ENCODE measurements at regions of chr11 and their contacts with region 1.

Region 1: DNA sequence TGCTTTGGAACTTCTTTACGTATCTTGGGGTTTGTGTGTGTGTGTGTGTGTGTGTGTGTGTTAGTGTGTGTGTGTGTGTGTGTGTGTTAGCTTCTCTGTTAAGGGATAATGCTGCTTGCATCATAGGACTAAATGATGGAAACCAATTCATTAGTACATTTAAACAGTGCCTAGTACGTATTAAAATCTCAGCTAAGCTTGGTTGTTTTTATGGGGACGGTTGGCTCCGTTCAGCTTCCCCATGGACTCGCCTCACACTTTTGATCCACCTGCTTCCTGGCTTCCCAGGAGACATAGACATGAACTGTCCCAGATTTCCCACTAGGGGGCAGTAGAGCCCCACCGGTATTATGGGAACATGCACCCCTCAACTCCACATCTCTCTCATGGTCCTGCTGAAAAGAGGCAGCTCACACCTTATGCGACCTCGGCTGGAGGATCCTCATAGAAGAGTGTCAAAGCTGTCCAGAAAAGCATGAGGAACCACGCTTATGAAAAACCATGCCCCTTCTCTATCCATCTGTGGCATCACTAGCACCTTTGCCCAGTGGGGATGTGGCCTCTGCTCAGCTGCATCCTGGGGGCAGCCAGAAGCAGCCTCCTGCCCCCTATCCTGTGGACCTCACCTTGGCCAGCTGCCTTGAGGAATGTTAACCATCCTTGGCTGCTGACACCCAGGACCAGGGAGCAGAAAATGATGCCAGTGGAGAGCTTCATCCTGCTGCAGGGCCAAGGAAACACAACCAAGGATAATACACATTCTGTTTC is 9.7 kb upstream of the SAAL1 start:
- DNase-seq: peak; percentile 41 to 81 (median 50)
- ATAC-seq: peak; percentile 89
- H3K4me3 ChIP-seq: no peak overlapping the region
- H3K4me3 Mint-ChIP-seq: no peak overlapping the region
- H3K27ac ChIP-seq: no peak overlapping the region
- H3K27ac Mint-ChIP-seq: no peak overlapping the region
- H3K4me1 ChIP-seq: peaks cover 6% of the 10 kb centered on the region
- H3K4me1 Mint-ChIP-seq: no peaks in the 10 kb centered on the region
- H3K27me3 ChIP-seq: peaks cover 3 to 7% of the 10 kb centered on the region in 2 experiments
- H3K27me3 Mint-ChIP-seq: peaks cover 27% of the 10 kb centered on the region
- CTCF ChIP-seq: peak; percentile 86

Region 2: GRCh38 chr11:18731949-18732821 is 616.6 kb after region 1 on chr11:
- CTCF ChIA-PET with region 1: interaction called, 3 read pairs
- POLR2A ChIA-PET with region 1: no interaction called
- intact Hi-C with region 1: loop called (anchors 2 kb)
- DNase-seq: peak; percentile 40 to 82 (median 67)
- ATAC-seq: peak; percentile 80
- H3K4me3 ChIP-seq: no peak overlapping the region
- H3K4me3 Mint-ChIP-seq: no peak overlapping the region
- H3K27ac ChIP-seq: no peak overlapping the region
- H3K27ac Mint-ChIP-seq: no peak overlapping the region
- H3K4me1 ChIP-seq: peaks cover 17% of the 10 kb centered on the region
- H3K4me1 Mint-ChIP-seq: peaks cover 10% of the 10 kb centered on the region
- H3K27me3 ChIP-seq: no peaks in the 10 kb centered on the region
- H3K27me3 Mint-ChIP-seq: no peaks in the 10 kb centered on the region
- CTCF ChIP-seq: peak; percentile 97

Region 3: GRCh38 chr11:18768472-18768901 is 652.9 kb after region 1 on chr11:
- CTCF ChIA-PET with region 1: interaction called, 10 read pairs
- POLR2A ChIA-PET with region 1: no interaction called
- intact Hi-C with region 1: loop called (anchors 1 kb)
- DNase-seq: no peak
- ATAC-seq: no peak
- H3K4me3 ChIP-seq: no peak overlapping the region
- H3K4me3 Mint-ChIP-seq: no peak overlapping the region
- H3K27ac ChIP-seq: no peak overlapping the region
- H3K27ac Mint-ChIP-seq: no peak overlapping the region
- H3K4me1 ChIP-seq: no peaks in the 10 kb centered on the region
- H3K4me1 Mint-ChIP-seq: no peaks in the 10 kb centered on the region
- H3K27me3 ChIP-seq: peaks cover 0 to 3% of the 10 kb centered on the region in 2 experiments
- H3K27me3 Mint-ChIP-seq: peaks cover 18% of the 10 kb centered on the region
- CTCF ChIP-seq: no peak

Region 4: DNA sequence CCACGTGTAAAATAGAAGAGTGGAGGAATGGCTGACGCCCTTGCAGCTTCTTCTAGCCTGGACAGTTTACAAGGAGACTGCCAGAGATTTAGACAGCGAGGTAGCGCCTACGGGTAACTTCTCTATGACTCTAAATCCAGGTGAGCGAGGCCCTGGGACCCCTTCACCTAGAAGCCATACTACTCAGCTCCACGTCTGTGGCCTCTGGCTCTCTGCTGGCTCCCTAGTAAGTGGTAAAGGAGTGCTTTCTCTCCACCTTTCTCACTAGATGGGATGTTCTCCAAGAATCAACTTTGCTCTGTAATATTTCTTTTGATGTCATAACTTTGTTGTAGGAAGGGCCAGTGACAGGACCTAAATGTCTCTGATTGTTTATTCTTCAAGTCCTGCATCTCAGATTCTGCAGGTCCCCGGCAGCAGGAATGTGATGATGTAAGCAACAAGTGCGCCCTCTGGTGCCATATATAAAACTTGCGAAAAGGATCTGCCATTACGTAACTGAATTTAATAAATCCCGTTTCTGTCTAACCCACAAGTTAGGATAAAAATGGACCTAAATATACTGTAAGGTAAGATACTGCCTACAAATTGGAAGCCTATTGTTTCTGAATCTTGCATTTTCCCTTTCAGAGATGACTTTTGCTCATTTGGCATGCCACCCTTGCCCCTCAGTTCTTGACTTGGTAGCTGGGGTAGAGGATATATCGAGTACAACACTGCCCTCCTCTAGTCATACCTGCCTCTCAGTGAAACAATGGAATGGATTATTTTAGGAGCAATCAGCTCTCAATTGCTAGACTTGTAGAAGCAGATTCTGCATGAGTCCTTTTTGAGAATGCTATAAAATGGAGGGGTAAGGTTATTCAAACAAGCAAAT is 687.1 kb after region 1 on chr11:
- CTCF ChIA-PET with region 1: interaction called, 4 read pairs
- POLR2A ChIA-PET with region 1: no interaction called
- intact Hi-C with region 1: loop called (anchors 1 to 5 kb)
- DNase-seq: peak in 10 of 14 experiments; percentile 5 to 71 (median 22)
- ATAC-seq: peak; percentile 41
- H3K4me3 ChIP-seq: no peak overlapping the region
- H3K4me3 Mint-ChIP-seq: no peak overlapping the region
- H3K27ac ChIP-seq: no peak overlapping the region
- H3K27ac Mint-ChIP-seq: no peak overlapping the region
- H3K4me1 ChIP-seq: no peaks in the 10 kb centered on the region
- H3K4me1 Mint-ChIP-seq: no peaks in the 10 kb centered on the region
- H3K27me3 ChIP-seq: no peaks in the 10 kb centered on the region
- H3K27me3 Mint-ChIP-seq: peaks cover 21% of the 10 kb centered on the region
- CTCF ChIP-seq: peak; percentile 60

Region 5: GRCh38 chr11:19076744-19077589 is 961.4 kb after region 1 on chr11:
- CTCF ChIA-PET with region 1: no interaction called
- POLR2A ChIA-PET with region 1: no interaction called
- intact Hi-C with region 1: loop called in 1 of 2 experiments (anchors 5 kb)
- DNase-seq: peak; percentile 18 to 72 (median 41)
- ATAC-seq: peak; percentile 73
- H3K4me3 ChIP-seq: no peak overlapping the region
- H3K4me3 Mint-ChIP-seq: no peak overlapping the region
- H3K27ac ChIP-seq: no peak overlapping the region
- H3K27ac Mint-ChIP-seq: no peak overlapping the region
- H3K4me1 ChIP-seq: no peaks in the 10 kb centered on the region
- H3K4me1 Mint-ChIP-seq: no peaks in the 10 kb centered on the region
- H3K27me3 ChIP-seq: no peaks in the 10 kb centered on the region
- H3K27me3 Mint-ChIP-seq: peaks cover 13% of the 10 kb centered on the region
- CTCF ChIP-seq: peak; percentile 100

Region 6: DNA sequence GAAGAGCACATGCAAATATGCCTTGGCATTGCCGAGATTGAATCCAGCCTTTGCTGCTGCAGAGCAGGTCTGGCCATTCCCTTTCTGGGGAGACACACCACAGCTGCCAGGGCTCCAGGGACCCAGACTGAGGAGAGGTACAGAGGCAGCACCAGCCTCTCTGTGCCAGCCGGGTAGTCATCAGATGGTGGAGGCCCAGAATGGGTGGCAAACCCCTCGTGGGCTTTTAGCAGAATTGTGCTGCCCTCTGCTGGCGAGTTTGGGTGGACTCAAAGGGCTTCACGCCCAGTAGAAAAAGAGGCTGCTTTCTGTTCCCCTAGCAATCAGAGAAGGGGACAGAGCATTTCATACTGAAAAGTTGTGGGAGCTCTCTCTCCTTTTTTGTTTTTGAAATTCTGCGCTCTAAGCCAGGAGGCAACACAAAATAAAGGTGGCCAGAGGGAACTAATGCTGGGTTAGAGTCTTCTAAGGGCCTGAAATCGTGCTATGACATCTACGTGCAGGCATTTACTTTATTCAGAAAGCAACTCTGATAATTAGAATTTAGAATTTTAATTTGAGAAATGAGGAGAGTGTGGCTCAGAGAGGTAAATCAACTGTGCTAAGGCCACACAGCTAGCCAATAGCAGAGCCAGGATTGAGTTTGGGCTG is 1438.3 kb after region 1 on chr11:
- CTCF ChIA-PET with region 1: no interaction called
- POLR2A ChIA-PET with region 1: no interaction called
- intact Hi-C with region 1: loop called (anchors 5 to 10 kb)
- DNase-seq: peak; percentile 37 to 74 (median 54)
- ATAC-seq: peak; percentile 48
- H3K4me3 ChIP-seq: no peak overlapping the region
- H3K4me3 Mint-ChIP-seq: no peak overlapping the region
- H3K27ac ChIP-seq: no peak overlapping the region
- H3K27ac Mint-ChIP-seq: no peak overlapping the region
- H3K4me1 ChIP-seq: peaks cover 3% of the 10 kb centered on the region
- H3K4me1 Mint-ChIP-seq: no peaks in the 10 kb centered on the region
- H3K27me3 ChIP-seq: peaks cover 0 to 1% of the 10 kb centered on the region in 2 experiments
- H3K27me3 Mint-ChIP-seq: peaks cover 20% of the 10 kb centered on the region
- CTCF ChIP-seq: peak; percentile 75

Measured in CD4-positive, alpha-beta T cell (primary cell).